WTC11 (cell line): ENCODE measurements at regions of chr1 and their contacts with region 1.

Region 1: GRCh38 chr1:21368515-21369289 is 71.2 kb upstream of the NBPF3 start:
- DNase-seq: peak; percentile 85
- ATAC-seq: peak; percentile 85
- H3K4me3 Mint-ChIP-seq: no peak overlapping the region
- H3K27ac Mint-ChIP-seq: no peak overlapping the region
- H3K4me1 Mint-ChIP-seq: 0 out of 2 replicates have a peak, but pooled peaks cover 3% of the 10 kb centered on the region
- H3K27me3 Mint-ChIP-seq: no peaks in the 10 kb centered on the region
- CTCF ChIP-seq: peak; percentile 91

Region 2: DNA sequence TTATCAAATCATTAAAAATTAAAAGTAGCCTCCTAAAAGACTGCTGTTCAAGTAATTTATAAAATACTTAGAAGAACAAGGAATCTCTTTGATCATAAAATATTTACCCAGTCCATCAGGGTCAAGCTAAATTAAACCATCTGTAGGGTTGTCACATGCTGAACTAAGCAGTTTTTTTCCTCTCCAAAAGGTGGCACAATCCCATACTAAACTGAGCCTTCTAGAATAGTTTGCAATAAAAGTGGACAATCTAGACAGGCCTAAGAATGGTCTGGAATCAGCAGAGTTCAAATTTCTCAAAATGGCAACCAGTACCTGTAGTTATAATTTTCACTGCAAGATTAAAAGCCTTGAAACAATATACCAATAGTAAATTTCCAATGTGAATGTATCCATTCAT is 386.8 kb before region 1 on chr1:
- CTCF ChIA-PET with region 1: no interaction called
- POLR2A ChIA-PET with region 1: no interaction called
- DNase-seq: no peak
- ATAC-seq: no peak
- H3K4me3 Mint-ChIP-seq: no peak overlapping the region
- H3K27ac Mint-ChIP-seq: no peak overlapping the region
- H3K4me1 Mint-ChIP-seq: no peaks in the 10 kb centered on the region
- H3K27me3 Mint-ChIP-seq: no peaks in the 10 kb centered on the region
- CTCF ChIP-seq: no peak

Region 3: DNA sequence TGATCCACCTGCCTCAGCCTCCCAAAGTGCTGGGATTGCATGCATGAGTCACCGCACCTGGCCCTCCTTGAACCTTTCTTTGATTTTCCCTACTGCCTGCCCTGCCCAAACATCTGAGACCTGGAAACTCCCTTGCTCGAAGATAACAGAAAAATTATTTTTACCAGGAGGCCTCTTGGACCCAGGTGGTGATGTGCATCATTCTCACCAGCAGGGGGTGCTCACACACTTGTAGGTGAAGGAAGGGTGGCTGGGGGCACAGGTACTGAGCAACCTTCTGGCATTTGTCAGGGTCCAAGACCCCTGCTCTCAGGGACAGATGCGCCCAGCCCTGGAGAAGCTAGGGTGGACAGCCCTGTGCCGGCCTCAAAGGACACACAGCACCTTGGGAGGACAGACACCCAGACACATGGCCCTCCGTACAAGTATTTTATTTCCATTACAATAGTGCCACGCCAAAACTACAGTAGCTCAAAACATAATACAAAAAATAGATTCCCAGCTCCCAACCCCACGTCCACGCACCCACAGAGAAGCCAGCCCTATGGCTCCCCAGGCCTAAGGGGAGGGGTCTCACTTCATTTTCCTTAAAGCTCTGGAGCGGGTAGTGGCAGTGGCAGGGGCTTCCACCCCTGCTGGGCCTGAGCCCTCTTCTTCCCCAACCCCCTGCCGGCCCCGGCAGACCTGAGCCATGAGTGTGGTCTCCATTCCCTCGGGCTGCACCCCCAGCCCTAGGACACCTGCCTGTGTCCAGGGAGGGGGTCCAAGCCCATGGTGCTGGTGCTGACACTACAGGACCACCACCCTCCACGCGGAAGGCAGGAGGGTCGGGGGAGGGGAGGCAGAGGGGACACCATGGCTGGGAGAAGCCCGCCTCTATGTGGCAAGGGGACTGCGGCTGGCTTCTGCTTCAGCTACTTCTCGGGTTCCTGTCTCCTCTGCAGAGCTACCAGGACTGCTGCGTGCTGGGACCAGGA is 151.6 kb before region 1 on chr1:
- CTCF ChIA-PET with region 1: interaction called, 77 read pairs
- POLR2A ChIA-PET with region 1: interaction called, 3 read pairs
- DNase-seq: peak; percentile 81
- ATAC-seq: peak; percentile 34
- H3K4me3 Mint-ChIP-seq: no peak overlapping the region
- H3K27ac Mint-ChIP-seq: no peak overlapping the region
- H3K4me1 Mint-ChIP-seq: peaks cover 7% of the 10 kb centered on the region; the same call in 1 of the 2 replicates
- H3K27me3 Mint-ChIP-seq: no peaks in the 10 kb centered on the region
- CTCF ChIP-seq: peak; percentile 76

Region 4: GRCh38 chr1:21255278-21255942 is 113.3 kb before region 1 on chr1:
- CTCF ChIA-PET with region 1: interaction called, 255 read pairs
- POLR2A ChIA-PET with region 1: no interaction called
- DNase-seq: peak; percentile 95
- ATAC-seq: peak; percentile 98
- H3K4me3 Mint-ChIP-seq: no peak overlapping the region
- H3K27ac Mint-ChIP-seq: no peak overlapping the region
- H3K4me1 Mint-ChIP-seq: no peaks in the 10 kb centered on the region
- H3K27me3 Mint-ChIP-seq: no peaks in the 10 kb centered on the region
- CTCF ChIP-seq: peak; percentile 79

Region 5: DNA sequence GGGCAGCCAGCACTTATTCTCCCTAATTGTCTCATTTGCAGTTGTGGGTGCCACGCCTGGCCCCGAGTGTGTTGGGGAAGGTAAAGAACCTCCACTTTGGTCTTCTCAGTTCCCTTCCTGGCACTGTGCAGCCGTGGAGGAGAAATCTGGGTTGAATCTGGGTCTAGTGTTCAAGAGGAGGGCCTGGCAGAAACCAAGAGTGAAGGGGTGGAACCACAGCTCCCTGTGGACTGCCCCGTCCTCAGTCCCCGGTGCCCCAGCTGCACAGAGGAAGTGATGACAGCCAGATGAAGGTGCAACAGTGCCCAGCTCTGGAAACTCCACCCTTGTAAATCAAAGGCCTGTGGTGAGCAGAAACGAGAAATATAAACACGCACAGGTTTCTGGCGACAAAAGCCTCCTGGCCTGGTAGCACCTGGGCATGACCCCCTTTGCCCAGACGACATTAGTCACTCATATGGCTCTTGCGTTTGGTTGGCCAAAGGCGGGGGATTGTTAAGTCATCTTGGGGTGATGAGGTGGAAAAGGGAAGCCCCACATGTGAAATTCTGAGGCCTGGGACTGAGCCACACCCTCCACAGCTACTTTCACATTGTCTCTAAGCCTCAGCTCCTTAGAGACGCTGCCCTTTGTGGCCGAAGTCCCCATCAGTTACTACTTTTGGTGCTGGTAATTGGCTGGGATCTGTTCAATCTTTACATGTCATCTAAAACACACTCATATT is 74.3 kb before region 1 on chr1:
- CTCF ChIA-PET with region 1: interaction called, 11 read pairs
- POLR2A ChIA-PET with region 1: no interaction called
- DNase-seq: no peak
- ATAC-seq: no peak
- H3K4me3 Mint-ChIP-seq: no peak overlapping the region
- H3K27ac Mint-ChIP-seq: no peak overlapping the region
- H3K4me1 Mint-ChIP-seq: peaks cover 33% of the 10 kb centered on the region
- H3K27me3 Mint-ChIP-seq: no peaks in the 10 kb centered on the region
- CTCF ChIP-seq: no peak

Region 6: DNA sequence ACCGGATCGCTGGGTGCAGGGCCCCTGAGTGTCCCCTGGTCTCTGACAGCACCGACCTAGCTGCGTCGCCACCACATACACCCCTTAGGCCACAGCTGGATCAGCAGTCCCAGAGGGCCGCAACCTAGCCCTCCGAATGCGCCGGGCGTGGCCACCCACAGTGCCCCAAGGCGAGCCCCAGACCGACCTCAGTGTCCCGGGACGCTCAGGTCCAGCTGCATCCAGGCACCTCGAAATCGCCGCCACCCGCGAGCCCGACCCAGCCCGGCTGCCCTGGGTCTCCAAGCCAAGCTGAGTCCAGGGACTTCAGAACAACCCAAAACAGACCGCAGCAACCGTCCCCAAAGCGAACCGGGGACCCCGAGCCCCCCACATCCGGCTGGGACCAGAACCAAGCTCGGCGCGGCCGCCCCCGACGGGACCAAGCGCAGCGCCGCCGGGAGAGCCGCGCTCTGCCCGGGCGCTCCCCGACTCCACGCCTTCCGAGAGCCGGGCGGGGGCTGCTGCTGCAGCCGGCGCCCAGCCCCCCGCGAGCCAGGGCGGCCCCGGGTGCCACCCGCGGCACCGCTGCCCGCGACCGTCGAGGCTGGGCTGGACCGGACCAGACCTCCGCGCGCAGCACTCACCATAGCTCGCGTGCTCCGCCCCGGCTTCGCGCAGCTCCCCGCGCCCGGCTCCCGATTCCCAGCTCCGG is 23.8 kb before region 1 on chr1:
- CTCF ChIA-PET with region 1: interaction called, 16 read pairs
- POLR2A ChIA-PET with region 1: interaction called, 4 read pairs
- DNase-seq: peak; percentile 40
- ATAC-seq: peak; percentile 17
- H3K4me3 Mint-ChIP-seq: peak overlapping the region; percentile 79
- H3K27ac Mint-ChIP-seq: no peak overlapping the region
- H3K4me1 Mint-ChIP-seq: peaks cover 19% of the 10 kb centered on the region
- H3K27me3 Mint-ChIP-seq: peaks cover 22% of the 10 kb centered on the region
- CTCF ChIP-seq: no peak

Region 7: GRCh38 chr1:21447311-21447710 is 78.6 kb after region 1 on chr1:
- CTCF ChIA-PET with region 1: no interaction called
- POLR2A ChIA-PET with region 1: no interaction called
- DNase-seq: no peak
- ATAC-seq: no peak
- H3K4me3 Mint-ChIP-seq: no peak overlapping the region
- H3K27ac Mint-ChIP-seq: no peak overlapping the region
- H3K4me1 Mint-ChIP-seq: no peaks in the 10 kb centered on the region
- H3K27me3 Mint-ChIP-seq: no peaks in the 10 kb centered on the region
- CTCF ChIP-seq: no peak

Region 8: GRCh38 chr1:21497466-21498061 is 128.9 kb after region 1 on chr1:
- CTCF ChIA-PET with region 1: interaction called, 52 read pairs
- POLR2A ChIA-PET with region 1: no interaction called
- DNase-seq: peak; percentile 69
- ATAC-seq: peak; percentile 92
- H3K4me3 Mint-ChIP-seq: no peak overlapping the region
- H3K27ac Mint-ChIP-seq: no peak overlapping the region
- H3K4me1 Mint-ChIP-seq: peaks cover 10% of the 10 kb centered on the region
- H3K27me3 Mint-ChIP-seq: peaks cover 4% of the 10 kb centered on the region
- CTCF ChIP-seq: no peak

Region 9: GRCh38 chr1:21524686-21525339 is 156.1 kb after region 1 on chr1:
- CTCF ChIA-PET with region 1: no interaction called
- POLR2A ChIA-PET with region 1: no interaction called
- DNase-seq: no peak
- ATAC-seq: no peak
- H3K4me3 Mint-ChIP-seq: no peak overlapping the region
- H3K27ac Mint-ChIP-seq: peak overlapping the region; percentile 93; the same call in 1 of the 2 replicates
- H3K4me1 Mint-ChIP-seq: peaks cover 40% of the 10 kb centered on the region
- H3K27me3 Mint-ChIP-seq: no peaks in the 10 kb centered on the region
- CTCF ChIP-seq: no peak

Region 10: GRCh38 chr1:22592919-22593790 is 1224.5 kb after region 1 on chr1:
- CTCF ChIA-PET with region 1: no interaction called
- POLR2A ChIA-PET with region 1: no interaction called
- DNase-seq: peak; percentile 75
- ATAC-seq: peak; percentile 97
- H3K4me3 Mint-ChIP-seq: peak overlapping the region; percentile 61
- H3K27ac Mint-ChIP-seq: no peak overlapping the region
- H3K4me1 Mint-ChIP-seq: 0 out of 2 replicates have a peak, but pooled peaks cover 2% of the 10 kb centered on the region
- H3K27me3 Mint-ChIP-seq: no peaks in the 10 kb centered on the region; the same call in 1 of the 2 replicates
- CTCF ChIP-seq: no peak